ENCODE measurements at regions of chr13 and their contacts with region 1.

Region 1: DNA sequence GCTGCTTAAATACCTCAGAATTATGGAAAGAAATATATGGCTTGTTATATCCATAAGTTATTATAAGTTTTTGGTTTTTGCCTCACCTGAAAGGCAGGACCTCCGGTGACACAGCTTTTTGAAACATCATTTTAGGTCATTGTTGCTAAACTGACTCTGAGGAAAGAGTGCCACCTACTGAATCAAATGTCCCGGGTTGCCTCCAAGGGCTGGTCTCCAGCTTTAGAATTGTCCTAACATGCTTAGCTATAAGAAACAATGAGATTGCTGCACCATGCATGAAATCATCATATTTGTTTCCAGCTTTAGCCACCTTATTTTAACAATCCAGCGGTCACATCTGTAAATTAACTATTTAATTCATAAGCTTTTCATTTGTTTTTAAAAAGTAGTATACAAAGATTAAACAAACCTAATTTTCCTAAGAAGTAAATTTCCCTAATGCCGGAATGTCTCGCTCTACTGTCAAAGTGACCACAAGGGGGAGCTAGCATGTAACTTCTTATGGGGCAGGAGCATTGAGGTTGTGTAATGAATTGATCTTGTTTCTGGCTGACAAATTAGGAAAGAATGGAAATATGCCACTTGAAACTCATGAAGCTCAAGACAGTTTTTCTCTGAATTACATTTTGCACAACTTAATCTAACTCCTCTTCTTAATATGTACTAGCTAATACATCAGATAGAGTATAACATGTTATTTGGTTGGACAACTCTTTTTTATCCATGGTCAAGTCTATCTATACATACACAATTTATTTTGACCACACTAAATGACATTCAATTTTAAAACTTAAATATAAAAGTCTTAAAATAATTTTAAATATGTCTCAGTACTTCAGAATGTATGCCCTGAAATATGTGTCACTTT is 6.7 kb upstream of the PCDH17 start:
- DNase-seq: peak; percentile 35
- H3K4me3 ChIP-seq: no peak overlapping the region
- H3K27ac ChIP-seq: no peak overlapping the region
- H3K4me1 ChIP-seq: no peaks in the 10 kb centered on the region
- CTCF ChIP-seq: peak; percentile 92

Region 2: GRCh38 chr13:58340895-58341294 is 716.1 kb after region 1 on chr13:
- CTCF ChIA-PET with region 1: no interaction called
- POLR2A ChIA-PET with region 1: no interaction called
- intact Hi-C with region 1: no loop called
- DNase-seq: no peak
- H3K4me3 ChIP-seq: no peak overlapping the region
- H3K27ac ChIP-seq: no peak overlapping the region
- H3K4me1 ChIP-seq: no peaks in the 10 kb centered on the region
- CTCF ChIP-seq: no peak

Region 3: GRCh38 chr13:58960888-58961287 is 1336.1 kb after region 1 on chr13:
- CTCF ChIA-PET with region 1: no interaction called
- POLR2A ChIA-PET with region 1: no interaction called
- intact Hi-C with region 1: loop called (anchors 10 kb)
- DNase-seq: peak; percentile 65
- H3K4me3 ChIP-seq: no peak overlapping the region
- H3K27ac ChIP-seq: no peak overlapping the region
- H3K4me1 ChIP-seq: peaks cover 17% of the 10 kb centered on the region
- CTCF ChIP-seq: peak; percentile 88

Region 4: GRCh38 chr13:58994777-58995176 is 1370.0 kb after region 1 on chr13:
- CTCF ChIA-PET with region 1: no interaction called
- POLR2A ChIA-PET with region 1: no interaction called
- intact Hi-C with region 1: loop called (anchors 10 kb)
- DNase-seq: peak; percentile 10
- H3K4me3 ChIP-seq: no peak overlapping the region
- H3K27ac ChIP-seq: no peak overlapping the region
- H3K4me1 ChIP-seq: no peaks in the 10 kb centered on the region
- CTCF ChIP-seq: peak; percentile 65; the same call in 1 of the 2 replicates

Region 5: DNA sequence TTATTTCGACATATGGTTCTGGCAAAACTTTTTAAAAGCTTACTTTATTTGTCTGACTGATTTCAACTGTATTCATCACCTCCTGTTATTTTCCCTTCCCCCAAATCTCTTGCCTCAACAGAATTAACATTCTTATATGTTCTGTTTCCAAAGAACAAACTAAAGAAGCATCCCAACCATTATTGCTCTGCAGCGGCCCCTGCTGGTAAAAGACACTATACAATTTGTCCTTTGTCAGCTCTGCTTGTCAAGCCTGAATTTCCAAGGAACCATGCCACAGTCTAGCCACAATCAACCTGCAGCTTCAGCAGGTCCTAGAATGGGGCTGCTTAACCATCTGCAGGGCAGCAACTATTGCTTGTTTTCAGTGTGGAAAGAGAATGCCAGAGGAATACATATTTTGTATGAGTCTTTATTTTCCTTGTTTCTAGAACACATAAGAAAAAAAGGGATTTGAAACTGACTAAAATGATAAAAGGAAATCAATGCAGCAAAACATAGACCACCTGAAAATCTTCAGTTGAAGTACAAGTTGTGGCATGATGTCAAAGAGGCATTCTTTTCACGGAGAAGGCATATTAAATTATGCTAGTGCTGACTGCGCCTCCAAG is 1693.6 kb after region 1 on chr13:
- CTCF ChIA-PET with region 1: no interaction called
- POLR2A ChIA-PET with region 1: no interaction called
- intact Hi-C with region 1: loop called (anchors 5 kb)
- DNase-seq: peak; percentile 65
- H3K4me3 ChIP-seq: no peak overlapping the region
- H3K27ac ChIP-seq: no peak overlapping the region
- H3K4me1 ChIP-seq: no peaks in the 10 kb centered on the region
- CTCF ChIP-seq: peak; percentile 92

Measured in OCI-LY7 (cell line).